ENCODE measurements at regions of chr3 and their contacts with region 1.

Region 1: GRCh38 chr3:161371430-161372326 is at the start of gene SPTSSB:
- DNase-seq: peak; percentile 96
- ATAC-seq: peak; percentile 76
- H3K4me3 ChIP-seq: peak within 1 kb of the TSS; percentile 76
- H3K27ac ChIP-seq: peak within 1 kb of the TSS; percentile 98
- H3K4me1 ChIP-seq: peaks cover 25% of the 10 kb centered on the region
- H3K27me3 ChIP-seq: no peaks in the 10 kb centered on the region
- CTCF ChIP-seq: peak; percentile 64
- total RNA-seq, gene SPTSSB: 78.0 and 144 TPM in 2 replicates

Region 2: GRCh38 chr3:161305095-161305991 is 66.3 kb before region 1 on chr3:
- CTCF ChIA-PET with region 1: no interaction called
- POLR2A ChIA-PET with region 1: interaction called, 24 read pairs
- intact Hi-C with region 1: no loop called
- DNase-seq: peak; percentile 64
- ATAC-seq: peak; percentile 46; the same call in 1 of the 2 replicates
- H3K4me3 ChIP-seq: no peak overlapping the region
- H3K27ac ChIP-seq: no peak overlapping the region
- H3K4me1 ChIP-seq: no peaks in the 10 kb centered on the region
- H3K27me3 ChIP-seq: no peaks in the 10 kb centered on the region
- CTCF ChIP-seq: peak; percentile 89

Region 3: GRCh38 chr3:161349529-161350278 is 22.0 kb before region 1 on chr3:
- CTCF ChIA-PET with region 1: no interaction called
- POLR2A ChIA-PET with region 1: interaction called, 5 read pairs
- intact Hi-C with region 1: loop called (anchors 1 kb)
- DNase-seq: peak; percentile 93
- ATAC-seq: peak; percentile 78
- H3K4me3 ChIP-seq: no peak overlapping the region
- H3K27ac ChIP-seq: peak overlapping the region; percentile 73
- H3K4me1 ChIP-seq: peaks cover 46% of the 10 kb centered on the region
- H3K27me3 ChIP-seq: no peaks in the 10 kb centered on the region
- CTCF ChIP-seq: no peak

Region 4: GRCh38 chr3:161388855-161389254 is 17.2 kb after region 1 on chr3:
- CTCF ChIA-PET with region 1: no interaction called
- POLR2A ChIA-PET with region 1: interaction called, 3 read pairs
- intact Hi-C with region 1: loop called (anchors 2 kb)
- DNase-seq: peak; percentile 60
- ATAC-seq: peak; percentile 96
- H3K4me3 ChIP-seq: no peak overlapping the region
- H3K27ac ChIP-seq: peak overlapping the region; percentile 51
- H3K4me1 ChIP-seq: peaks cover 12% of the 10 kb centered on the region
- H3K27me3 ChIP-seq: no peaks in the 10 kb centered on the region
- CTCF ChIP-seq: no peak

Region 5: DNA sequence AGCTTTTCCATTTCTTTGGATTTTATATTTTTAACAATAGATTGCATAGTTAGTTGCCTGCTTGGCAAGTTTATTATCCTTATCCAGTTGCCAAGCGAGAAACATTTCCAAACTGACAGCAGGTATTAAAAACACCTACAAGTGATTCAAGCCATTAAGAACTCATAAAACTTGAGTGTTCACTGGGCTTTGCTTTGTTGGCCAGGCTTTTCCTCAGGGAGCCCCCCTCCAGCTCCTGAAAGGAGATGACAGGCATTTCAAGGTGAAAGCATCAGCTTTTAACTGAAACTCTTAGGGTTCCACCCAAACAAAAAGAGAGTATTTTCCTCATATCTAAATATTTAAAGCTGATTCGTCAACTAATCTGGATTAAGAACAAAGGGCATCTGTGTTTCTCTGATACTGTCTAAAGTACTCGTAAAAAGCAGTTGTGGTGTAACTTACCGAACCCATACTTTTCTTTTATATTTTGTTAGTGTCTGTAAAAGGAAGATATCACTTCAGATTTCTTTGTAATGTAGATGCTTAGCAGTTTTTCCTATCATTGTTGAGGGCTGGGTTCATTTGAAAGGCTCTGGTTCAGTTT is 488.3 kb after region 1 on chr3:
- CTCF ChIA-PET with region 1: no interaction called
- POLR2A ChIA-PET with region 1: interaction called, 11 read pairs
- intact Hi-C with region 1: no loop called
- DNase-seq: peak; percentile 12
- ATAC-seq: peak; percentile 20; the same call in 1 of the 2 replicates
- H3K4me3 ChIP-seq: no peak overlapping the region
- H3K27ac ChIP-seq: no peak overlapping the region
- H3K4me1 ChIP-seq: peaks cover 16% of the 10 kb centered on the region
- H3K27me3 ChIP-seq: no peaks in the 10 kb centered on the region
- CTCF ChIP-seq: no peak

Measured in PC-3 (cell line).